ENCODE measurements at regions of chr11 and their contacts with region 1.

Region 1: GRCh38 chr11:6812390-6813005 is 13.0 kb upstream of the OR6A2 start:
- DNase-seq: peak; percentile 46
- ATAC-seq: peak; percentile 76
- H3K4me3 Mint-ChIP-seq: no peak overlapping the region
- H3K27ac Mint-ChIP-seq: no peak overlapping the region
- H3K4me1 Mint-ChIP-seq: no peaks in the 10 kb centered on the region
- H3K27me3 Mint-ChIP-seq: peaks cover 23% of the 10 kb centered on the region

Region 2: GRCh38 chr11:6674862-6675261 is 137.6 kb before region 1 on chr11:
- CTCF ChIA-PET with region 1: no interaction called
- DNase-seq: no peak
- ATAC-seq: no peak
- H3K4me3 Mint-ChIP-seq: no peak overlapping the region
- H3K27ac Mint-ChIP-seq: no peak overlapping the region
- H3K4me1 Mint-ChIP-seq: peaks cover 45% of the 10 kb centered on the region
- H3K27me3 Mint-ChIP-seq: no peaks in the 10 kb centered on the region

Region 3: GRCh38 chr11:6799402-6799801 is 13.1 kb before region 1 on chr11 and contains the start of gene OR6A2:
- CTCF ChIA-PET with region 1: interaction called, 10 read pairs
- DNase-seq: no peak
- ATAC-seq: no peak
- H3K4me3 Mint-ChIP-seq: no peak within 1 kb of the TSS
- H3K27ac Mint-ChIP-seq: no peak within 1 kb of the TSS
- H3K4me1 Mint-ChIP-seq: no peaks in the 10 kb centered on the region
- H3K27me3 Mint-ChIP-seq: peaks cover 3% of the 10 kb centered on the region
- total RNA-seq, gene OR6A2: not detected

Region 4: DNA sequence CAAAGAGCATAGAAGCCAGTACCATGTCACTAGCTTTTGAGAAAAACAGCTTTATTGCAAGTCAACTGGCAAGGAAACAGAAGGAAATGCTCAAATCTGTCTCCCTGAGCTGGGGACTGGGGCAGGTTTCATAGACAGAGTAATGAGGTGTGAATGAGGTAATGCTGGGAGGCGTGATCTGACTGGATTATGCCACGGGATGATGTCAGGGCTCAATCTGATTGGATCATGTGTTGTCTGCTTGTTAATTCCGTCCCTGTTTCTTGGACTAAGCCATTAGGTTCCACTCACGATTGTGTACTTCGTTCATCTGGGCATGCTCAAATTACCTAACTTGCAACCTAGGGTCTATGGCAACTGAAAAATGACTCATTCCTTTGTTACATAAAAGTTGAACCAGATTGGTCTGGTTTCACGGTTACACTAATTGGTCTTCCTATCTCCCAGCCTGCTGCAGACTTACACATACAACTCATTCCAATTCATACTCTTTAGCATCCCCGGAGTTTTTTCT is 12.8 kb after region 1 on chr11:
- CTCF ChIA-PET with region 1: interaction called, 13 read pairs
- DNase-seq: no peak
- ATAC-seq: no peak
- H3K4me3 Mint-ChIP-seq: no peak overlapping the region
- H3K27ac Mint-ChIP-seq: no peak overlapping the region
- H3K4me1 Mint-ChIP-seq: no peaks in the 10 kb centered on the region
- H3K27me3 Mint-ChIP-seq: peaks cover 10% of the 10 kb centered on the region

Region 5: GRCh38 chr11:6871278-6871677 is 58.8 kb after region 1 on chr11:
- CTCF ChIA-PET with region 1: no interaction called
- DNase-seq: no peak
- ATAC-seq: no peak
- H3K4me3 Mint-ChIP-seq: no peak overlapping the region
- H3K27ac Mint-ChIP-seq: no peak overlapping the region
- H3K4me1 Mint-ChIP-seq: no peaks in the 10 kb centered on the region
- H3K27me3 Mint-ChIP-seq: peaks cover 4% of the 10 kb centered on the region